ENCODE measurements at regions of chr3 and their contacts with region 1.

Region 1: GRCh38 chr3:194134757-194135528 is 1.0 kb upstream of the HES1 start:
- DNase-seq: peak; percentile 99
- H3K4me3 ChIP-seq: peak overlapping the region in 2 of 3 experiments; percentile 13 to 51
- H3K27ac ChIP-seq: peak overlapping the region; percentile 96
- H3K4me1 ChIP-seq: peaks cover 24% of the 10 kb centered on the region
- H3K27me3 ChIP-seq: no peaks in the 10 kb centered on the region
- CTCF ChIP-seq: no peak
- POLR2A ChIP-seq: peak; percentile 27

Region 2: GRCh38 chr3:193665370-193665989 is 469.5 kb before region 1 on chr3:
- CTCF ChIA-PET with region 1: interaction called, 12 read pairs
- POLR2A ChIA-PET with region 1: no interaction called
- dilution Hi-C with region 1: no loop called
- intact Hi-C with region 1: loop called (anchors 1 kb)
- DNase-seq: peak; percentile 57
- H3K4me3 ChIP-seq: no peak overlapping the region
- H3K27ac ChIP-seq: no peak overlapping the region
- H3K4me1 ChIP-seq: no peaks in the 10 kb centered on the region
- H3K27me3 ChIP-seq: no peaks in the 10 kb centered on the region
- CTCF ChIP-seq: peak in 1 of 2 donors; percentile 22
- POLR2A ChIP-seq: no peak

Region 3: DNA sequence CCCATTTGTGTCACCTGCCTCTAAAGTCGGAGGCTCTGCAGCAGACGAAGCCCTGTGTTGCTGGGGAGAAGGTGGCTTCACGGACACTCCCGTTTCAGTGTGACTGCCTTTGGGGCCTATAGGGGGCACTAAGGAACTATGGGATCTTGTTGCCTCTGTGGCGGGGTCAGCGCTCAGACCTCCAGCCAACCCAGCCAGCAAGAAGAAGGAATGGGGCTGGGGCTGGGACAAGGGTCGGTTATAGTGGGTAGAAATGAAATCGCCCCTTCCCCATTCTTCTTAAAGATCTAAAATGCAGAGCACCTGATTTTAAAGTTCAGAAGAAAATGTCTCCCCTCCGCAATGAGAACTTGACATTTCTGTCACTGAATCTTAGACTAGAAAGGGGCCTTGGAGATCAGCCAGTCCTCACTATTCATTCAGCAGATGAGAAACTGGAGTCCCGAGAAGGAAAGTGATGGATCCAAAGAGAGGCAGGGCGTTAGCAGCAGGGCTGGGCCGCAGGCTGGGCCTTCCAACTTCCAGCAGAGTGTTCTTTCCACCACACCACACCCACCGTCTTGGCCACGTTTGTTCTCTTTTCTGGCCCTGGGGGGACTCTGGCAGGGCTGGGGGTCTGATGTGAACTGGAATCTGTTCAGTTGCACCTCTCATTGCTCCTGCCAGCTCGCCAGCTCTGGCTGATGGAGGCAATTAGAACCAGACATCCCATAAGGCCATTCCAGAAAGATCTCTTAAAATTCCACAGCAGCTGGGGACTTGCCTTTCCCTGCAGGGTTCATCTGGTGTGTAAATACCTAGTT is 346.6 kb before region 1 on chr3:
- CTCF ChIA-PET with region 1: interaction called, 178 read pairs
- POLR2A ChIA-PET with region 1: interaction called, 4 read pairs
- dilution Hi-C with region 1: no loop called
- intact Hi-C with region 1: loop called (anchors 1 kb)
- DNase-seq: peak; percentile 76
- H3K4me3 ChIP-seq: no peak overlapping the region
- H3K27ac ChIP-seq: no peak overlapping the region
- H3K4me1 ChIP-seq: peaks cover 5% of the 10 kb centered on the region
- H3K27me3 ChIP-seq: peaks cover 0 to 1% of the 10 kb centered on the region in 2 experiments
- CTCF ChIP-seq: peak; percentile 82 to 88
- POLR2A ChIP-seq: no peak

Region 4: DNA sequence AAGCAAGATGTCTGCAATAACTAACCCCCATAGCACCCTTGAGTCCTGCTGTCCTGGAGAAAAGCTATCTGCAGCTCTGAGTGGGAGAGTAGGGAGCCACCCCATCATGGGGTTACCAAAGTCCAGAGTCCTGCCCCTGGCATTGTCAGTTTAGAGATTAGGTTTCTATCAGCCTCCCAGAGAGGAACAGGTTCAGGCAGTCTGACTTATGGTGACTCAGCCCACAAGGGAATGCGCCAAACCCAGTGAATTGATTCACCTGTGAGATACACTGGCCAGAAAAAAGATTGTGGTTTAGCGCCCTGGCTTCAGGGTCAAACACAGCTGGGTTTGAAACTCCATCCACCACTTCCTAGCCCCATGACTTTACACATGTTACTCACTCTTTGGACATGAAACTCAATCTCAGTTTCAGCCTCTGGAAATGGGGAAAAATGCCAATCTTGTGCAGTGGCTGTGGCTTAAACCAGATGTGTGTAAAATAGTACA is 262.6 kb before region 1 on chr3:
- CTCF ChIA-PET with region 1: interaction called, 3 read pairs
- POLR2A ChIA-PET with region 1: no interaction called
- dilution Hi-C with region 1: no loop called
- intact Hi-C with region 1: loop called (anchors 2 kb)
- DNase-seq: peak; percentile 72
- H3K4me3 ChIP-seq: no peak overlapping the region
- H3K27ac ChIP-seq: peak overlapping the region; percentile 6
- H3K4me1 ChIP-seq: peaks cover 33% of the 10 kb centered on the region
- H3K27me3 ChIP-seq: no peaks in the 10 kb centered on the region
- CTCF ChIP-seq: no peak
- POLR2A ChIP-seq: peak; percentile 30

Region 5: GRCh38 chr3:194043516-194043915 is 91.4 kb before region 1 on chr3:
- CTCF ChIA-PET with region 1: interaction called, 6 read pairs
- POLR2A ChIA-PET with region 1: interaction called, 8 read pairs
- dilution Hi-C with region 1: no loop called
- intact Hi-C with region 1: loop called (anchors 1 kb)
- DNase-seq: peak; percentile 77
- H3K4me3 ChIP-seq: no peak overlapping the region
- H3K27ac ChIP-seq: peak overlapping the region; percentile 56
- H3K4me1 ChIP-seq: peaks cover 35% of the 10 kb centered on the region
- H3K27me3 ChIP-seq: no peaks in the 10 kb centered on the region
- CTCF ChIP-seq: no peak
- POLR2A ChIP-seq: no peak

Region 6: GRCh38 chr3:194089357-194090177 is 45.4 kb before region 1 on chr3:
- CTCF ChIA-PET with region 1: interaction called, 7 read pairs
- POLR2A ChIA-PET with region 1: interaction called, 16 read pairs
- dilution Hi-C with region 1: no loop called
- intact Hi-C with region 1: loop called (anchors 1 kb)
- DNase-seq: peak; percentile 99
- H3K4me3 ChIP-seq: no peak overlapping the region
- H3K27ac ChIP-seq: peak overlapping the region; percentile 94
- H3K4me1 ChIP-seq: peaks cover 22% of the 10 kb centered on the region
- H3K27me3 ChIP-seq: no peaks in the 10 kb centered on the region
- CTCF ChIP-seq: no peak
- POLR2A ChIP-seq: no peak

Region 7: DNA sequence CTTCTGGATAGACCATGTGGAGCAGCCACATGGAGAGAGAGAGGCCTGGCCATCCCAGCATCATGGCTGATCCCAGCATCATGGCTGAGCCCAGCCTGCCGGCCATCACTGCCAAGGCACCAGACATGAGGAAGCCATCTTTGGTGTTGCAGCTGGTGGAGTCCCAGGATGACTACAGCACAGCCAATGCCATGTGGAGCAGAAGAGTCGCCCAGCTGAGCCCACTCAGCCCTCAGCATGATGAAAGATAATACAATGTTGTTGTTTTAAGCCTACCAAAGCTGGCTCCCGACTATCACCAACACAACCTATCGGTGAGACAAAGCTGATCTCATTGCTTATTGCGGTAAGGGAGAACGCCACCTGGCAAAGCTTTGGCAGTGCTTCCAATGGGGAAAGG is 19.4 kb after region 1 on chr3:
- CTCF ChIA-PET with region 1: no interaction called
- POLR2A ChIA-PET with region 1: no interaction called
- dilution Hi-C with region 1: no loop called
- intact Hi-C with region 1: no loop called
- DNase-seq: no peak
- H3K4me3 ChIP-seq: no peak overlapping the region
- H3K27ac ChIP-seq: no peak overlapping the region
- H3K4me1 ChIP-seq: no peaks in the 10 kb centered on the region
- H3K27me3 ChIP-seq: peaks cover 0 to 9% of the 10 kb centered on the region in 2 experiments
- CTCF ChIP-seq: no peak
- POLR2A ChIP-seq: no peak

Region 8: GRCh38 chr3:194212845-194213320 is 77.9 kb after region 1 on chr3:
- CTCF ChIA-PET with region 1: no interaction called
- POLR2A ChIA-PET with region 1: no interaction called
- dilution Hi-C with region 1: no loop called
- intact Hi-C with region 1: no loop called
- DNase-seq: no peak
- H3K4me3 ChIP-seq: no peak overlapping the region
- H3K27ac ChIP-seq: no peak overlapping the region
- H3K4me1 ChIP-seq: peaks cover 9% of the 10 kb centered on the region
- H3K27me3 ChIP-seq: no peaks in the 10 kb centered on the region
- CTCF ChIP-seq: no peak
- POLR2A ChIP-seq: no peak

Region 9: GRCh38 chr3:194287374-194287773 is 152.4 kb after region 1 on chr3:
- CTCF ChIA-PET with region 1: no interaction called
- POLR2A ChIA-PET with region 1: no interaction called
- dilution Hi-C with region 1: no loop called
- intact Hi-C with region 1: no loop called
- DNase-seq: no peak
- H3K4me3 ChIP-seq: no peak overlapping the region
- H3K27ac ChIP-seq: no peak overlapping the region
- H3K4me1 ChIP-seq: no peaks in the 10 kb centered on the region
- H3K27me3 ChIP-seq: peaks cover 0 to 2% of the 10 kb centered on the region in 2 experiments
- CTCF ChIP-seq: no peak
- POLR2A ChIP-seq: no peak

Region 10: DNA sequence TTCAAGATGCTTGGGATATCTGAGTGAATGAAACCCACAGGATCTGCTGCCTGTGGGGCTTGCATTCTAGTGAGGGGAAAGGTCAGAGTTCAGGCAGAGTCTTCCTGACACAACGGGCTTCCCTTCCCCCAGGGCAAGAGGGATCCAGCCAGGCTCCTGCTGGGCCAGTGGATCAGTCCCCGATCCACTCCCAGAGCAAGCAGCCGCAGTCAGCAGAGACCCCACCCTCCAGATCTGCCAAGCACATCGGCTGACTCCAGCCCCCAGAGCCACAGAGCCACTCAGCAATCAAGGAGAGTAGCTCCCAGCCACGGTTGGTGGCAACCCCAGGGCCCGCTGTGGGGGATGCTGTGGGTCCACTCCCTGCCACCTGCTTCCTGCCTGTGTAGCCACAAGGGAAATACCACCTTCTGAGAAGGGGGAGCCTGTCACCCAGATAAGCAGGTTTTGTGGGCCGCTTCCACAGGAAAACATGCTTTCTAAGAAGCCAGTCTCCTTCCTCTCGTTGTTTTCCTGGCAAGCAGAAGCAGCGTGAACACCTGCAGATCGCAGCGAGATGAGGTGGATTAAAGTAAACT is 171.3 kb after region 1 on chr3:
- CTCF ChIA-PET with region 1: interaction called, 7 read pairs
- POLR2A ChIA-PET with region 1: interaction called, 10 read pairs
- dilution Hi-C with region 1: no loop called
- intact Hi-C with region 1: no loop called
- DNase-seq: peak; percentile 89
- H3K4me3 ChIP-seq: no peak overlapping the region
- H3K27ac ChIP-seq: no peak overlapping the region
- H3K4me1 ChIP-seq: peaks cover 14% of the 10 kb centered on the region
- H3K27me3 ChIP-seq: peaks cover 2% of the 10 kb centered on the region in 2 experiments
- CTCF ChIP-seq: no peak
- POLR2A ChIP-seq: no peak

Measured in endothelial cell of umbilical vein (primary cell).